BJ (cell line): ENCODE measurements at regions of chr3 and their contacts with region 1.

Region 1: DNA sequence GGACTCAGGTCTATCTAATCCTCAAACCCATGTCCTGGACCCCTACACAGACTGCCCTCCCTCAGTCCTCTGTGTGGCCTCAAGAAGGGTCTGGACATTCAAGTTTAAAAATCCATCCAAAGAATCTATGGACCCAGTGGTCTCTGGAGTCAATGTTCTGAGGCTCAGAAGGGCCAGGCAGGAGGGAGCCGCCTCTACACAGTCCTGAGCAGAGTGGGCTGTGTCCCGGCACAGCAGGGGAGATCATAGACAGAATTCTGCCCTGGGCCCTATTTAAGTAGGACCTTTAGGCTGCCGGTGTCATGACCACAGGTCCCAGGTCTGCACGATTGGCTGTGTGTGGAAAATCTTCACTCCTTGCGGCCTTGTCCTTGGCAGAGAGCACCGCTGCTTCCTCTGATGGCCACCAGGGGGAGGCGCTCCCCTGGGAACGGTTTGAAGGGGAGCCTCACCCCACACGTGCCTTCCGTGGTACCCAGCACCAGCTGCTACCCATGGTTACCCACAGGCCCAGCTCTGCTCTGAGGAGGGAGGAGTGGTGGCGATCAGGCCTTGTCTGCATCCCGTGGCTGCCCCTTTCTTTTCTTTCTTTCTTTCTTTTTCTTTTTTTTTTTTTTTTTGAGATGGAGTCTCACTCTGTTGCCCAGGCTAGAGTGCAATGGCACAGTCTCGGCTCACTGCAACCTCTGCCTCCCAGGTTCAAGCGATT is 37.9 kb downstream of the CHRD start:
- DNase-seq: no peak
- H3K4me3 ChIP-seq: no peak overlapping the region
- H3K27me3 ChIP-seq: no peaks in the 10 kb centered on the region
- CTCF ChIP-seq: peak; percentile 95

Region 2: GRCh38 chr3:184203526-184203925 is 214.2 kb before region 1 on chr3:
- CTCF ChIA-PET with region 1: no interaction called
- POLR2A ChIA-PET with region 1: no interaction called
- DNase-seq: no peak
- H3K4me3 ChIP-seq: no peak overlapping the region
- H3K27me3 ChIP-seq: peaks cover 6% of the 10 kb centered on the region; the same call in 1 of the 2 replicates
- CTCF ChIP-seq: no peak

Region 3: GRCh38 chr3:184335661-184336546 is 81.9 kb before region 1 on chr3:
- CTCF ChIA-PET with region 1: no interaction called
- POLR2A ChIA-PET with region 1: no interaction called
- DNase-seq: no peak
- H3K4me3 ChIP-seq: peak overlapping the region; percentile 71
- H3K27me3 ChIP-seq: no peaks in the 10 kb centered on the region
- CTCF ChIP-seq: no peak

Region 4: GRCh38 chr3:184469423-184469822 is 51.6 kb after region 1 on chr3:
- CTCF ChIA-PET with region 1: interaction called, 30 read pairs
- POLR2A ChIA-PET with region 1: no interaction called
- DNase-seq: no peak
- H3K4me3 ChIP-seq: no peak overlapping the region
- H3K27me3 ChIP-seq: peaks cover 2% of the 10 kb centered on the region; the same call in 1 of the 2 replicates
- CTCF ChIP-seq: peak; percentile 69

Region 5: DNA sequence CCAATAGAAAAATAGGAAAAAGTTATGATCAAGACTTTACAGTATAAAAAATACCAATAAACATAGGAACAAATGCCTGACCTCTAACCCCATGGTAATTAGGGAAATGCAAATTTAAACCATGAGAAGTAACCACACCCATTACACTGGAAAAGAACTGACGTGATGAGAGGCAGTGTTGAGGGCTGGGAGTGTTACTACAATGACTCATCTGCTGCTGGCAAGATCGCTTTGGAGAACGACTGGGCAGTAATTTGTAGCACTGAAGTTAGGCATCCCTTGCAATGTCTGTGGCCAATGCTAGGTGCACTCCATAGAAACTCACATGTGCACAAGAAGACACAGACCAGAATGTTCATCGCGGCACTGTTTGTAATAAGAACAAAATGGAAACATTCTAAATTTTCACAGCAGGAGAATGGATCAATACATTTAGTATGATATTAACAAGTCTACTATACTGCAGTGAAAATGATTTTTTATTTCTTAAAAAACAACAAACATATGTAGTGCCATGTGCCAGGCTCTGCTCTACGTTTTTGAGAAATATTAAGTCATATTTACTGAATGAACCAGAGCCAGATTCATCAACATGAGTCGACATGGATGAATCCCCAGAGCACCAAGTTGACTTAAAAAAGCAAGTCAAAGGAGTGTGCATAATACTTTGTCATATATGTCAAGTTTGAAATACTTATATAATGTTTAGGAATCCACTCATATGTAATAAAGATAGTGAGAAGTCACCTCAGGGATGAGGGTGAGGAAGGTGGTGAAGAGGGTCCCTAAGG is 106.2 kb after region 1 on chr3:
- CTCF ChIA-PET with region 1: interaction called, 11 read pairs
- POLR2A ChIA-PET with region 1: no interaction called
- DNase-seq: no peak
- H3K4me3 ChIP-seq: no peak overlapping the region
- H3K27me3 ChIP-seq: peaks cover 10% of the 10 kb centered on the region
- CTCF ChIP-seq: no peak

Region 6: DNA sequence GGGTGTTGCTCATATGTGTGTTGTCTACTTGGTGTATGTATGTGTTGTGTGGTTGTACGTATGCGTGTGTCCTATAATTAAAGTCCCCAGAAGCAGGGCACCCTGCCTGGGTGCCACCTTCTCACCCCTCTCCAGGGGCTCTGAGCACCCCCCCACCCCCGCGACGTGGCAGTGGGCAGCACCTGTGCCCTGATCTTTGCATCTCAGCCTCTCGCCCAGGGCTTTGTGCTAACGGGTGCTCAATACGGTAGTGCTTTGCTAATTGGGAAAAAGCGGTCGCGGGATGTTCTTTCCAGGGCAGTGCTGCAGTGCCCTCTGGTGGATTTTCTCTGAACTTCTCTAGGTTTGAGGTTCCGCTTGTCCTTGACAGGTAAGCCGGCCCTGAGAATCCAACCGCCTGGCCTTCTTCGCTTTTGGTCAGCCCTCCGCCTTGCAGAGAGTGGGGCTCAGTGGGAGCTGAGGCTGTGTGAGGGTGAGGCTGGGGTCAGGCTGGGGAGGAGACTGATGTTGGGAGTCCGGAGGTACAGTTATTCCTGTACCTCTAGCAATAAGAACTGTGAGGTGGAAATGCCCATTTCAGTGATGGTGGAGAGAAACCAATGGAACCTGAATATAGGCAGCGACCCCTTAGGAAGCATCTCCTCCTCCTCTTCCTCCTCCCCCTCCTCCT is 126.2 kb after region 1 on chr3:
- CTCF ChIA-PET with region 1: interaction called, 15 read pairs
- POLR2A ChIA-PET with region 1: no interaction called
- DNase-seq: no peak
- H3K4me3 ChIP-seq: no peak overlapping the region
- H3K27me3 ChIP-seq: peaks cover 11% of the 10 kb centered on the region
- CTCF ChIP-seq: peak; percentile 80